ENCODE measurements at regions of chr13 and their contacts with region 1.

Region 1: GRCh38 chr13:36275190-36276002 is 22.2 kb downstream of the CCDC169 start:
- DNase-seq: peak in 1 of 3 donors; percentile 73
- ATAC-seq: no peak
- H3K4me3 ChIP-seq: no peak overlapping the region
- H3K4me1 ChIP-seq: no peaks in the 10 kb centered on the region
- CTCF ChIP-seq: no peak

Region 2: DNA sequence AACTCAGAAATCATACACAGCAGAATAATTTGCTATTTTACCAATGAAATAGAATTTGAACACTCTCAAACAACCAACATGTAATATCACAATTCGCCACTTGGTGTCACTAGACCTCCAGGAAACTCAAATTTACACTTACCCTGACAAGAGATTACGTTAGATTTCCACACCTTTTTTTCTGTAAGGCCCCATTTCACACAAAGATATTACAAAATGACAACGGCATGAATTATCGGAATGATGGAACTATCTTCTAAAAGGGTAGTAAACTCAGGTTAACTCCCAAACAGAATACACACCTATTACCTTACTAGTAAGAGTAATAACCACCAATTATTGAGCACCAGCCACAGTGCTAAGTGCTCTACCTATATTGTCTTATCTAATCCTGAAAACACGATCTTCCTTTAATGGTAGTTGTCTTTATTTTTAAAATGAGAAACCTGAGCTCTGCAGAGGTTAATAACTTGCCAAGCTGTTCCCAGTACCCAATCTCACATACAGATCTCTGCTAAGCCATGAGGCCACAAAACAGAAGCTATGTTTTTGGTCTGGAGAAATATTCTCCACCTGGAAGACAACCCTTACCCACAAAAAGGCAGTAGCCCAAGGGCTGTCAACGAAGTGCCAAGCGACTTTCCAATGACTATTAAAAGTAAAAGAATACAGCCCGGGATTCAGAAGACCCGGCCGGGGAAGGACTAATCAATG is 296.6 kb before region 1 on chr13:
- intact Hi-C with region 1: loop called (anchors 5 kb)
- DNase-seq: peak in 1 of 3 donors; percentile 71
- ATAC-seq: peak; percentile 53
- H3K4me3 ChIP-seq: no peak overlapping the region
- H3K4me1 ChIP-seq: no peaks in the 10 kb centered on the region
- CTCF ChIP-seq: peak; percentile 46